Esophagus muscularis mucosa (tissue), 4 donors: ENCODE measurements at regions of chr1 and their contacts with region 1.

Region 1: GRCh38 chr1:111481387-111482221 is 7.8 kb downstream of the C1orf162 start:
- DNase-seq: peak; percentile 94
- H3K4me3 ChIP-seq: no peak overlapping the region
- H3K27ac ChIP-seq: no peak overlapping the region
- H3K4me1 ChIP-seq: peaks cover 9 to 25% (median 13%) of the 10 kb centered on the region in 4 donors
- H3K27me3 ChIP-seq: no peaks in the 10 kb centered on the region
- CTCF ChIP-seq: peak; percentile 70 to 92 (median 73)
- EP300 ChIP-seq: no peak
- POLR2A ChIP-seq: no peak

Region 2: DNA sequence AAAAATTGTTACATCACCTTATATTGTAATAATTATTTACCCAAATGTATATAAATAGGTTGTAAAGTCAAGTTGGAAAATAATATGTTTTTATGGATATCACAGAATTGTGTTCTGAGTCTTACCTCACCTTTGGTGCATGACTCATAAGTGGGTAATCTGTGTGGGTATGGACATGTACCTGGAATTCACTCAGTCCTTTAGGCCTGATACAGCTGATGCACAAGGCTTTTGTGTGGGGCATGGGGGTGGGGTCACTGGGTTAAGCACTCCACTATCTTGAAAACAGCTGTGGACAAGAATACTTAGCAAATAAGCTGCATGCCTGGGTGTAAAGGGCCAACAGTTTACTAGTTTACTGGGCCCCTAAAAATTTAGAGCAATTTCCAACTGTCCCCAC is 223.2 kb after region 1 on chr1:
- intact Hi-C with region 1: loop called (anchors 5 kb)
- DNase-seq: no peak
- H3K4me3 ChIP-seq: no peak overlapping the region
- H3K27ac ChIP-seq: no peak overlapping the region
- H3K4me1 ChIP-seq: peaks cover 0 to 36% (median 27%) of the 10 kb centered on the region in 4 donors
- H3K27me3 ChIP-seq: no peaks in the 10 kb centered on the region
- CTCF ChIP-seq: no peak
- EP300 ChIP-seq: no peak
- POLR2A ChIP-seq: no peak

Region 3: DNA sequence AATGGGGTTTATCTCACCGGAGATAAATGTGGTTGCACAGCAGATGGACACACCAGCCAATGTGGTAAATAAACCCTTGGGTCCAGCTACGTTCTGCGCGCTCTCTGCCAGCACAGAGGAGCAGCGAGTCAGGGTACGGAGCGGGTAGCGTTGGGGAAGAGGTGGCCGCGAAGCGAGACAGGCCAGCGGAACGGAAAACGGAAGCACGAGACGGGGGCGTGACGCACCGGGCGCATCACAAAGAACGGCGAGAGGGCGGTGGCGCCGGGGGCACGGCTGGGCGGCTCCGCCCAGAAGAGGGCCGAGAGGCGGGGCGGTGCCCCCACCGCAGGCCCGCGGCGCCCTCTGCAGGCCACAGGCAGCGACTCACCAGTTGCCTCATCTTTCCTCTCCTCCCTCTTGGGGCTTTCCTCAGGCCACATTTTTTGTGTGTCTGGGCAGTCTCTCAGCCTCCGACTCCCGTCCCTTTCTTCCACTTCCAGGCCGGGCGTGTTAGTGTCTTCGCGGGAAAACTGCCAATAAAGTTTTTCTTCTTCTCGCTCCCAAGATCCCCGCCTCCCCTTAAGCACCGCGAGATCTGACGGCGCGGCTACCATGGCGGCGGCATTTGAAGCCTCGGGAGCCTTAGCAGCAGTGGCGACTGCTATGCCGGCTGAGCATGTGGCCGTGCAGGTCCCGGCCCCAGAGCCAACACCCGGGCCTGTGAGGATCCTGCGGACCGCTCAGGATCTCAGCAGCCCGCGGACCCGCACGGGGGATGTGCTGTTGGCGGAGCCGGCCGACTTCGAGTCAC is 273.9 kb after region 1 on chr1 and contains the start of gene DDX20:
- intact Hi-C with region 1: loop called (anchors 5 kb)
- DNase-seq: peak; percentile 98
- H3K4me3 ChIP-seq: peak within 1 kb of the TSS; percentile 73 to 87 (median 86)
- H3K27ac ChIP-seq: peak within 1 kb of the TSS; percentile 84 to 95 (median 91)
- H3K4me1 ChIP-seq: peaks cover 17 to 41% (median 24%) of the 10 kb centered on the region in 4 donors
- H3K27me3 ChIP-seq: no peaks in the 10 kb centered on the region
- CTCF ChIP-seq: peak; percentile 89 to 98 (median 95)
- EP300 ChIP-seq: no peak
- POLR2A ChIP-seq: no peak
- total RNA-seq, gene DDX20: 9.5 to 19.9 (median 13.1) TPM